Astrocyte of the cerebellum (primary cell): ENCODE measurements at regions of chr16 and their contacts with region 1.

Region 1: GRCh38 chr16:67279296-67280089 is at the start of gene PLEKHG4:
- DNase-seq: no peak
- H3K4me3 ChIP-seq: peak within 1 kb of the TSS; percentile 44
- CTCF ChIP-seq: peak; percentile 47

Region 2: DNA sequence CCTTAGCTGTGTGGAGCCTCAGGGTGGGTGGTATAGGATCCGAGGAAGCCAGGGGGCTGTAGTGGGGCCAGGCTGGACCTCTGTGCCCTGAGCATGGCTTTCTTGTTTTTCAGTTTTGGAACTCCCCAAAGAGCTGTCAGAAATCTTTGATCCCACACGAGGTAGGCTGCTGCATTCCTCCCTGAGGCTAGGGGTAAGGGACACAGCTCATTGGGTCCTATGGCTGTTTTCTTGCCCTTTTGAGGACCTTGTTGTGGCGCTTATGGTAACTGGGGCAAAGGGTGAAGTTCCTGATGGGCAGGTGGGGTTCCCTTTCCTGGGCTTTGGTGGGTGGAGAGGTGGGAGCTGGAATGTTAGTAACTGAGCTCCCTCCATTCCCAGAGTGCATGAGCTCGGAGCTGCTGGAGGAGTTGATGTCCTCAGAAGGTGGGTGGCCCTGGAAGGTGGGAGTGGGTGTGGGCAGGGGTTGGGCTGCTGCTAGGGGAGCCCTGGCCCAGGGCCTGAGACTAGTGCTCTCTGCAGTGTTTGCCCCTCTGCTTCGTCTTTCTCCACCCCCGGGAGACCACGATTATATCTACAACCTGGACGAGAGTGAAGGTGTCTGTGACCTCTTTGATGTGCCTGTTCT is 81.9 kb before region 1 on chr16:
- in situ Hi-C with region 1: no loop called
- DNase-seq: no peak
- H3K4me3 ChIP-seq: no peak overlapping the region
- CTCF ChIP-seq: no peak

Region 3: GRCh38 chr16:67207857-67208519 is 71.5 kb before region 1 on chr16:
- in situ Hi-C with region 1: no loop called
- DNase-seq: no peak
- H3K4me3 ChIP-seq: no peak overlapping the region
- CTCF ChIP-seq: no peak

Region 4: GRCh38 chr16:67311607-67312488 is 32.4 kb after region 1 on chr16:
- in situ Hi-C with region 1: no loop called
- DNase-seq: peak; percentile 98
- H3K4me3 ChIP-seq: no peak overlapping the region
- CTCF ChIP-seq: no peak

Region 5: GRCh38 chr16:67364600-67365235 is 85.2 kb after region 1 on chr16:
- in situ Hi-C with region 1: loop called (anchors 5 kb)
- DNase-seq: no peak
- H3K4me3 ChIP-seq: no peak overlapping the region
- CTCF ChIP-seq: no peak

Region 6: GRCh38 chr16:67561824-67562525 is 282.5 kb after region 1 on chr16:
- in situ Hi-C with region 1: no loop called
- DNase-seq: peak; percentile 88
- H3K4me3 ChIP-seq: peak overlapping the region; percentile 87
- CTCF ChIP-seq: no peak